Right ventricle myocardium inferior (tissue), 1 donor: ENCODE measurements at regions of chr4 and their contacts with region 1.

Region 1: DNA sequence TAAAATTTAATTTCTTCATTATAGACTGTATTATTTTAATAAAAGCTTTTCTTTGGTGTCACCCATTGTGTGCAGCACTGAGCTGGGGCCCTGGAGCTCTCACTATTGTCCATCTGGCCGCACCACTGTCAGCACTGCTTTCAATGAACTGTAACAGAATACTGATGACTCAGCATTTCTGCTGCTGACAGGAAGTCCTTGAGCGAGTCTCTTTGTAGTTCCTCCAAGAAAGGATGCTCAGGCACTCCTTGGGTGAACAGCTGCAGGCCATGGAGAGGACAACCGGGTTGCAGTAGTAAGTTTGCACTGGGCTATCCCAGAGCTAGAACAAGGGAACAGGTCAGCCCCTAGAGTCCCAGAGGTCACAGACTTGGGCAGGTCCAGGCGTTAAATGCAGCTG is 81.6 kb downstream of the SORBS2 start:
- DNase-seq: no peak
- ATAC-seq: peak; percentile 56

Region 2: GRCh38 chr4:185774845-185775680 is 44.7 kb after region 1 on chr4:
- intact Hi-C with region 1: no loop called
- DNase-seq: no peak
- ATAC-seq: no peak

Region 3: GRCh38 chr4:185859111-185859510 is 128.7 kb after region 1 on chr4:
- intact Hi-C with region 1: loop called (anchors 5 kb)
- DNase-seq: no peak
- ATAC-seq: no peak